Prostate gland (tissue), 2 donors: ENCODE measurements at regions of chr2 and their contacts with region 1.

Region 1: DNA sequence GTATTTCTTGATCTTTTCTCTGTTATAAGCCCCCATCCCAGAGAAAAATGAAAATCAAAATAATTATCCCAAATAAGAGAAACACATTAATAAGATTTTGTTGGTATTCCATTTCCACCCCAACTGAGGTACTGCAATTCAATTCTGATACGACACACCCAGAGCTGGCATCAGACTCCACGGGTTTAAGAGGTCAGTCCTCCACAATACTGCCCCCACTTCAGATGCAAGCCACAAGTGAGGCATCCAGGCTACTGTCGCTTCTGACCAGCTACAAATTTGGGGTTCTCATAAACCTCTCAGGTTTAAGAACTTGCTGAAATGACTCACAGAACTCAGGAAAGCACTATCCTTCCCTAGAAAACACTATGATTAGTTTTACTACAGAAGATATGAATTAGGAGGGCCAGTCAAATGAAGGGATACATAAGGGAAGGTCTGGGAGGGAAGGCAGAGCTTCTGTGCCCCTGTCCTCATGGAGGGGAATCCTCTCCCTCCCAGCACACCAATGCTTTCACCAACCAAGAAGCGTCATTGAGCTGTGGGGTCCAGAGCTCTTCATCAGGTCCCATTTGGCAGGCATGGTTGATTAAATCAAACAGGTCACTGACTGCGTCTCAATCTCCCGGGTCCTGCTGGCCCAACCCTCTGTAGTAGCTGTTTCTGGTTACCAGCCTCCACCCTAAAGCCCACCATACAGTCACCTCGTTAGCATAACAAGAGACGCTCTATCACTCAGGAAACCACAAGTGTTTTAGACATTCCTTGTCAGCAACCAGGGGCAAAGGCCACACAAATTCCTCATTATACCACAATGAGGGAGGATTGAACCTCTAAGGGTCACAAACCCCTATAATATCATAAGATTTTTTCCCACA is 46.2 kb downstream of the IWS1 start:
- DNase-seq: no peak
- H3K4me3 ChIP-seq: no peak overlapping the region
- H3K27ac ChIP-seq: no peak overlapping the region
- H3K4me1 ChIP-seq: no peaks in the 10 kb centered on the region
- H3K27me3 ChIP-seq: no peaks in the 10 kb centered on the region
- CTCF ChIP-seq: no peak
- POLR2A ChIP-seq: no peak

Region 2: DNA sequence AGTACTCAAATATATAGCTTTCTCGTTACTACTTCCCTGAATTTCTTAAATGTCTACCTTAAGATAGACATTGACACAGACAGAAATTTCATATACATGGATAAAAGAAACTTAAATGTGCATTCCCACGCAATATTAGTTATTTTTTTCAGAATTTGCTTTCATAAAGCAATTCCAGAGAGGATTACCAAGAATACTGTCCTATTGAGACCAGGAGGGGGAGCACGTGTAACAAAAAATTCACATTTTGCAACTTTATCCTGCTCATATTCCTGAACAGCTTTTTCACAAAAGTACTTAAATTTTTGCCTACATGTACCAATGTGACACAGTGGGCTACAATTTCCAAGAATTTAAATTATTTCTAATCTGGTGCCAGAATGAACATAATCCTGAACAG is 155.5 kb before region 1 on chr2:
- intact Hi-C with region 1: loop called (anchors 5 kb)
- DNase-seq: no peak
- H3K4me3 ChIP-seq: no peak overlapping the region
- H3K27ac ChIP-seq: no peak overlapping the region
- H3K4me1 ChIP-seq: no peaks in the 10 kb centered on the region
- H3K27me3 ChIP-seq: no peaks in the 10 kb centered on the region
- CTCF ChIP-seq: peak in 3 of 4 experiments; percentile 43 to 59 (median 58)
- POLR2A ChIP-seq: no peak

Region 3: DNA sequence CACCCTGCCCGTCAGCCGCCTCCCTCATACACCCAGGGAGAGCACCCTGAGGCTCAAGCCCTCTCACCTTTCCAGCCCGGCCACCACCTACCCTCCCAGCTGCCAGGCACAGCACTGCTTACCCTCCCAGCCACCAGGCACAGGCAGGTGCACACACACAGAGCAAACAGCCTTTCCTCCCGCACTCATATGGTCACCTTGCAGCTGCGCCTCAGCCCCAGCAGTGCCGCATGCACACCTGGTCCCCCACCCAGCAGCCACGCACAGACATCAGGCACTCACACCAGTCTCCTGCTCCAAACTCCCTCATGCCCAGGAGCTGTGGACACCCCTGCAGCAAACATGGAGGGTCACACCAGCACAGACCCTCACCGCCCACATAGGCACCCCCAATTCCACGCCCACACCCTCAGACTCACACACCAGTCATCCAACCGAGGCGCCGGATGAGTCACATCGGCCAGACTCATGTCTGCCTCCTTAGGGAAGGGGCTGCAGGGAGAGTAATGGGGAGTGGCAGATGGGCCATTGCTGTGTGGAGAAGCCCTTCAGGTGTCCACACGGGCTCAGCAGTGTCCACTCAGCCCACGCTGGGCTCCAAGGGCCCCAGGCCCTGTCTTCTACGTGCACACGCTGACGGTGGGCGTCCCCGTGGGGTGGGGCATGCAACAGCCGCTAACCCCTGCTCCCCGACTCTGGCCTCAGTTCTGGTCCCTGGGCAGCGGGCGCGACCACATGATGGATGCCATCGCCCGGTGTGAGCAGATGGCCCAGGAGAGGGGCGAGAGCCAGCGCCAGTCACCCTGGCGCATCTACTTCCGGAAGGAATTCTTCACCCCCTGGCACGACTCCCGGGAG is 143.5 kb after region 1 on chr2:
- intact Hi-C with region 1: no loop called
- DNase-seq: no peak
- H3K4me3 ChIP-seq: no peak overlapping the region
- H3K27ac ChIP-seq: no peak overlapping the region
- H3K4me1 ChIP-seq: no peaks in the 10 kb centered on the region
- H3K27me3 ChIP-seq: no peaks in the 10 kb centered on the region
- CTCF ChIP-seq: no peak
- POLR2A ChIP-seq: no peak

Region 4: DNA sequence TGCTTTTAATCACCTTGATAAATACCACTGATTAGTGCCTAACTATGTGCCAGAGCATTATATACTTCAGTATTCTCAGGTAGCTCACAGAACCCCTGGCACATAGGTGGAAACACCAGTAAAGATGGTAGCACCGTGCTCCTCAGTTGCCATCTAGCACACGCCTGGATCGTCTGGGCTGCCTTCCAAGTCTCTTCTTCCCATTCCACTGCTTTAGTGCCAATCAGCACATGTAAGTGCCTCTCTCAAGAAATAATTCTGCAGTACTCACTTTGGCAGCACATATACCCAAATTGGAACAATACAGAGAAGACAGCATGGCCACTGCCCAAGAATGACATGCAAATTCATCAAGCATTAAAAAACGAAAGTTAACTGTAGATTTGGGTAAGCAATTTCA is 364.9 kb after region 1 on chr2:
- intact Hi-C with region 1: no loop called
- DNase-seq: no peak
- H3K4me3 ChIP-seq: no peak overlapping the region
- H3K27ac ChIP-seq: no peak overlapping the region
- H3K4me1 ChIP-seq: no peaks in the 10 kb centered on the region
- H3K27me3 ChIP-seq: no peaks in the 10 kb centered on the region
- CTCF ChIP-seq: no peak
- POLR2A ChIP-seq: no peak